PC-3 (cell line): ENCODE measurements at regions of chr12 and their contacts with region 1.

Region 1: GRCh38 chr12:123645878-123646277 is 12.2 kb downstream of the GTF2H3 start:
- DNase-seq: no peak
- ATAC-seq: peak; percentile 48
- H3K4me3 ChIP-seq: no peak overlapping the region
- H3K27ac ChIP-seq: no peak overlapping the region
- H3K4me1 ChIP-seq: no peaks in the 10 kb centered on the region
- H3K27me3 ChIP-seq: no peaks in the 10 kb centered on the region
- CTCF ChIP-seq: 0 out of 2 replicates have a peak, but pooled peaks have one; percentile 22

Region 2: GRCh38 chr12:121723200-121723599 is 1922.7 kb before region 1 on chr12:
- CTCF ChIA-PET with region 1: no interaction called
- POLR2A ChIA-PET with region 1: interaction called, 14 read pairs
- intact Hi-C with region 1: no loop called
- DNase-seq: no peak
- ATAC-seq: no peak
- H3K4me3 ChIP-seq: no peak overlapping the region
- H3K27ac ChIP-seq: no peak overlapping the region
- H3K4me1 ChIP-seq: no peaks in the 10 kb centered on the region
- H3K27me3 ChIP-seq: no peaks in the 10 kb centered on the region
- CTCF ChIP-seq: no peak

Region 3: DNA sequence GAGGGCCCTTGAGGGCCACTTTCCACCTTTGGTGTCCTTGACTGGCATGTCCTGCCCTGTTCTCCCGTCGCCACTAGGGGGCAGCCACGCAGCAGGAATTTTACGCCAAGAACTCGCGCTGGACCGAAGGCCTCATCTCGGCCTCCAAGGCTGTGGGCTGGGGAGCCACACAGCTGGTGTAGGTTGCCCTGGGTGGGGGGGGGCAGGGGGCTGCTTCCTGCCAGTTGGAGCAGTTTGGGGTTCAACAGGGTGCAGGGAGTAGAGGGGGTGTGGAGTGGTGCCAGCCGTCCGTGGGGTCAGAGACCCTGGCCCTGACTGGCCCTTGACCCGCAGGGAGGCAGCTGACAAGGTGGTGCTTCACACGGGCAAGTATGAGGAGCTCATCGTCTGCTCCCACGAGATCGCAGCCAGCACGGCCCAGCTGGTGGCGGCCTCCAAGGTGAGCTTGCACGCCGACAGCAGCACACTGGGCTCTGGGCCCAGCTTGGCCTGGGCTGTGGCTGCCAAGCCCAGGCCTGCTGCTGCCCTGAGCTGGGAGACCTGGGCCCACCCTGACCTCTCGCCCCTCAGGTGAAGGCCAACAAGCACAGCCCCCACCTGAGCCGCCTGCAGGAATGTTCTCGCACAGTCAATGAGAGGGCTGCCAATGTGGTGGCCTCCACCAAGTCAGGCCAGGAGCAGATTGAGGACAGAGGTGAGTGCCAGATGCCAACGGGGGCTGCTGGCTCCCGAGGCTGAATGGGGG is 785.4 kb before region 1 on chr12:
- CTCF ChIA-PET with region 1: interaction called, 7 read pairs
- POLR2A ChIA-PET with region 1: no interaction called
- intact Hi-C with region 1: loop called (anchors 1 kb)
- DNase-seq: peak; percentile 88
- ATAC-seq: peak; percentile 78
- H3K4me3 ChIP-seq: no peak overlapping the region
- H3K27ac ChIP-seq: no peak overlapping the region
- H3K4me1 ChIP-seq: no peaks in the 10 kb centered on the region
- H3K27me3 ChIP-seq: no peaks in the 10 kb centered on the region
- CTCF ChIP-seq: peak; percentile 95

Region 4: DNA sequence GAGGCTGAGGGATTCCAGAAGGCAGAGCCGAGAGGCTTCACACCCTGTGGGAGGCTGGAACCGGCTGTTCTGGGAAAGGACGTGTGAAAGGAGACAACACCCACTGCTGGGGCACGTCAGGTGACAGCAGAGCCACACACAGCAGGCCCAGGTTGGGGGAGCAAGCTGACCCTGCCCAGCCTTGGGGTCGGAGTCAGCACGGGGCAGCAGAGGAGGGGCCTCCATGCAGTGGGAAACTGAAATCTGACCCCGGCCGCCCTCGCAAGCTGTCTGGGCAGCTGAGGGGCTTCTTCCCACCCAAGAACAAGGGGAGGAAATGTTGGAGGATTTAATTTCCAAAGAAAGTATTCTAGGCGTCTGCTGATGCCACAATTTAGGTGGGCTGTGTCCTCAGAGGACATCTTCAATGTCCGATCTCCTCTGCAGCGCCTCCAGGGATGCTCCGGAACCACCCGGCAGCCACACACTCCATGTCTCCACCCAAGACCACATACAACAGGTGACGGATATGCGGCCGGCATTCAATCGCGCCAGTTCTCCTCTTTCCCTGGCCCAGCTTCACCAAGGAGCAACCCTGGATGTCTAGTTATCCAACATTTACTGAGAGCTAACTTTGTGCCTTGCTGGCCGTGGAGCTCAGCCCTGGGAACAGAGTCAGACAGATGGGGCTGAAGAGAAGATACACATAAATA is 157.2 kb before region 1 on chr12:
- CTCF ChIA-PET with region 1: no interaction called
- POLR2A ChIA-PET with region 1: no interaction called
- intact Hi-C with region 1: no loop called
- DNase-seq: no peak
- ATAC-seq: no peak
- H3K4me3 ChIP-seq: no peak overlapping the region
- H3K27ac ChIP-seq: no peak overlapping the region
- H3K4me1 ChIP-seq: no peaks in the 10 kb centered on the region
- H3K27me3 ChIP-seq: no peaks in the 10 kb centered on the region
- CTCF ChIP-seq: no peak